Activated CD4-positive, alpha-beta memory T cell treated with anti-CD3 and anti-CD28 coated beads for 36 hours (primary cell): ENCODE measurements at regions of chr11 and their contacts with region 1.

Region 1: GRCh38 chr11:121236115-121237001 is 56.2 kb upstream of the SC5D start:
- DNase-seq: no peak
- H3K4me3 Mint-ChIP-seq: no peak overlapping the region
- H3K27ac Mint-ChIP-seq: peak overlapping the region; percentile 19
- H3K4me1 Mint-ChIP-seq: peaks cover 29% of the 10 kb centered on the region
- H3K27me3 Mint-ChIP-seq: peaks cover 22% of the 10 kb centered on the region

Region 2: DNA sequence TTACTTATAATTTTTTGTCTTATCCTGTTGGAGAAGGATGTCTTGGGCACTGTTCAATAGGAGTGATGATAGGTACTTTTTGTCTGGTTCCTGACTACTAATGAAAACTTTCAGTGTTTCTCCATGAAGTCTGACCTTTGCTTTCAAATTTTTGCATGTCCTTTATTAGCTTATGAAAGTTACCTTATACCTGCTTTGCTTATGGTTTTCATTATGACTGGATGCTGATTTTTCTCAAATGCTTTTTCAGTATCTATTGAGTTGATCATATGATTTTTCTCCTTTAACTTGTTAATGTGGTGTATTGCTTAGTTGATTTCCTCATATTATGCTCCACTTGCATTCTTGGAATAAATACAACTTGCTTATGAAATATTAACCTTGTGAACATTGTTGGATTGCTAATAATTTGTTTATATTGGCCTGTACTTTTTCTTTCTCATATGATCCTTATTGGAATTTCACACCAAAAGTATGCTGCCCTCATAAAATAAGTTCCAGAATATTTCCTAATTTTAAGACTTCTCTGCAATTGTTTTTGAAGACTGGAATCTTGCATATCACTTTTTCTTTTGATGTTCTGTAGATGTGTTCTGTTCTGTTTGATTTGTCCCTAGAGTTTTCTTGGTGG is 28.8 kb before region 1 on chr11:
- CTCF ChIA-PET with region 1: no interaction called
- POLR2A ChIA-PET with region 1: no interaction called
- intact Hi-C with region 1: no loop called
- DNase-seq: no peak
- H3K4me3 Mint-ChIP-seq: no peak overlapping the region
- H3K27ac Mint-ChIP-seq: no peak overlapping the region
- H3K4me1 Mint-ChIP-seq: no peaks in the 10 kb centered on the region
- H3K27me3 Mint-ChIP-seq: peaks cover 19% of the 10 kb centered on the region

Region 3: GRCh38 chr11:121249039-121249663 is 12.8 kb after region 1 on chr11:
- CTCF ChIA-PET with region 1: no interaction called
- POLR2A ChIA-PET with region 1: no interaction called
- intact Hi-C with region 1: loop called (anchors 1 kb)
- DNase-seq: peak; percentile 62
- H3K4me3 Mint-ChIP-seq: no peak overlapping the region
- H3K27ac Mint-ChIP-seq: peak overlapping the region; percentile 25
- H3K4me1 Mint-ChIP-seq: peaks cover 2% of the 10 kb centered on the region
- H3K27me3 Mint-ChIP-seq: peaks cover 6% of the 10 kb centered on the region

Region 4: GRCh38 chr11:121265586-121265985 is 29.2 kb after region 1 on chr11:
- CTCF ChIA-PET with region 1: no interaction called
- POLR2A ChIA-PET with region 1: no interaction called
- intact Hi-C with region 1: no loop called
- DNase-seq: no peak
- H3K4me3 Mint-ChIP-seq: no peak overlapping the region
- H3K27ac Mint-ChIP-seq: no peak overlapping the region
- H3K4me1 Mint-ChIP-seq: peaks cover 3% of the 10 kb centered on the region
- H3K27me3 Mint-ChIP-seq: peaks cover 39% of the 10 kb centered on the region

Region 5: GRCh38 chr11:121292495-121293287 is 56.3 kb after region 1 on chr11 and contains the start of gene SC5D:
- CTCF ChIA-PET with region 1: no interaction called
- POLR2A ChIA-PET with region 1: no interaction called
- intact Hi-C with region 1: loop called (anchors 1 kb)
- DNase-seq: peak; percentile 96
- H3K4me3 Mint-ChIP-seq: peak within 1 kb of the TSS; percentile 95
- H3K27ac Mint-ChIP-seq: peak within 1 kb of the TSS; percentile 95
- H3K4me1 Mint-ChIP-seq: peaks cover 41% of the 10 kb centered on the region
- H3K27me3 Mint-ChIP-seq: no peaks in the 10 kb centered on the region
- total RNA-seq, gene SC5D: 23.3 to 24.7 TPM

Region 6: GRCh38 chr11:121417055-121417551 is 180.7 kb after region 1 on chr11:
- CTCF ChIA-PET with region 1: no interaction called
- POLR2A ChIA-PET with region 1: no interaction called
- intact Hi-C with region 1: loop called (anchors 5 kb)
- DNase-seq: peak; percentile 81
- H3K4me3 Mint-ChIP-seq: no peak overlapping the region
- H3K27ac Mint-ChIP-seq: peak overlapping the region; percentile 85
- H3K4me1 Mint-ChIP-seq: peaks cover 66% of the 10 kb centered on the region
- H3K27me3 Mint-ChIP-seq: no peaks in the 10 kb centered on the region

Region 7: DNA sequence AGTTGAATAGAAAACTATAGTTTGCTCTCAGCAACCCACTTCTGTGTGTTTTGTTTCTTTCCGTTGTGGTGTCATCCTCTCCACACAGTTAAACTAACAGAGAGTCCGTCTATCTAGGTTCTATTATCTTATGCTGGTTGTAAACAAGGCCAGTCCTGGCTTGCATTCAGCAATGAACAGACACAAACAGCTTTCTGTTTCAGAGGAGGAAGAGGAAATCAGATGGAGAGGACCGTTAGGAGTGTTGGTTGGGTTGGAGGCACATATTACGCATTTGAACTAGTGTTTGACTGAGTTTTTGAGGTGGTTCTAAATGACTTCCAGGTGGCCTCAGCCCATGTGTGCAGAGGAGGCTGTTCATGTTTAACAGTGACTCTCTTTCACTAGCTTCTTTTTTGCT is 345.9 kb after region 1 on chr11:
- CTCF ChIA-PET with region 1: no interaction called
- POLR2A ChIA-PET with region 1: no interaction called
- intact Hi-C with region 1: loop called (anchors 5 kb)
- DNase-seq: peak; percentile 24
- H3K4me3 Mint-ChIP-seq: no peak overlapping the region
- H3K27ac Mint-ChIP-seq: peak overlapping the region; percentile 69
- H3K4me1 Mint-ChIP-seq: peaks cover 38% of the 10 kb centered on the region
- H3K27me3 Mint-ChIP-seq: no peaks in the 10 kb centered on the region

Region 8: GRCh38 chr11:121650351-121651256 is 414.2 kb after region 1 on chr11:
- CTCF ChIA-PET with region 1: no interaction called
- POLR2A ChIA-PET with region 1: no interaction called
- intact Hi-C with region 1: loop called (anchors 1 kb)
- DNase-seq: peak; percentile 50
- H3K4me3 Mint-ChIP-seq: peak overlapping the region; percentile 21
- H3K27ac Mint-ChIP-seq: peak overlapping the region; percentile 51
- H3K4me1 Mint-ChIP-seq: peaks cover 28% of the 10 kb centered on the region
- H3K27me3 Mint-ChIP-seq: no peaks in the 10 kb centered on the region